ENCODE measurements at regions of chr5 and their contacts with region 1.

Region 1: GRCh38 chr5:149990518-149991376 is 9.7 kb downstream of the TIGD6 start:
- DNase-seq: peak; percentile 24 to 90 (median 75)

Region 2: DNA sequence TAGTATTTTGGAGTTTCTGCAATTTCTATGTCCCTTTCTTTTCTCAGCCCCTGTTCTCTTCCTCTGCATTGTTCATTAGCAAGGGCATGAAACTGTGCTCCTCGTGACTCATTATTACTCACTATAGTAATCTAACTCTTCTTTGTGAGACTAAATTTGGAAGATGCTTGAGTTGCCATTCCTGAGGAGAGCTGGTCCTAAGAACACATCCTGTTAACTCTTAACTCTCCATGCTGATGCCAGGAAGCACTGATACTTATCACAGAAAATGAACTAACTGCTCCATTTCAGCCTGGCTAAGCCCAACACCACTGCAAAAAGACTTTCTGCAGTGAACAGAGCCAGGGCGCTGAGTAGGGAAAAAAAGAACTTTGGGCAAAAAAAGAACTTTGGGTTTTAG is 428.9 kb before region 1 on chr5:
- intact Hi-C with region 1: no loop called
- DNase-seq: peak in 3 of 42 donors; percentile 32 to 54 (median 45)

Region 3: DNA sequence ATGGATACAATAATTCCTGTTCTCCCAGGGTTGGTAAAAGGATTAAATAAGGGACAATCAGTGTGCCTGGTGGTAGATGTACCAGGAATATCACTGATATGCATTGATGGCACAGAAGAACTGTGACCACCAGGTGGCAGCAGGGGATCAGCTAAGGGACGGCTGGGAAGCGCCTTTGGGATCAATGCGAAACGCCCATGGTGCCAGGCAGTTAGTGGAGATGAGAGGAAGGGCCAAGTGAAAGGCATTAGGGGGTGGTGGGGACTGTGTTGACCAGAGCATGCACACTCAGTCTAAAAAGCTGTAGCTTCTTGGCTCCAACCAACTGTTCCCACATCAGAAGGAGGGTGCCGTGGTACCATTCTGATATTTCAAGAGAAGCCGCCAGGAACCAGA is 353.9 kb before region 1 on chr5:
- intact Hi-C with region 1: loop called (anchors 5 kb)
- DNase-seq: peak in 33 of 42 donors; percentile 9 to 96 (median 84)

Region 4: DNA sequence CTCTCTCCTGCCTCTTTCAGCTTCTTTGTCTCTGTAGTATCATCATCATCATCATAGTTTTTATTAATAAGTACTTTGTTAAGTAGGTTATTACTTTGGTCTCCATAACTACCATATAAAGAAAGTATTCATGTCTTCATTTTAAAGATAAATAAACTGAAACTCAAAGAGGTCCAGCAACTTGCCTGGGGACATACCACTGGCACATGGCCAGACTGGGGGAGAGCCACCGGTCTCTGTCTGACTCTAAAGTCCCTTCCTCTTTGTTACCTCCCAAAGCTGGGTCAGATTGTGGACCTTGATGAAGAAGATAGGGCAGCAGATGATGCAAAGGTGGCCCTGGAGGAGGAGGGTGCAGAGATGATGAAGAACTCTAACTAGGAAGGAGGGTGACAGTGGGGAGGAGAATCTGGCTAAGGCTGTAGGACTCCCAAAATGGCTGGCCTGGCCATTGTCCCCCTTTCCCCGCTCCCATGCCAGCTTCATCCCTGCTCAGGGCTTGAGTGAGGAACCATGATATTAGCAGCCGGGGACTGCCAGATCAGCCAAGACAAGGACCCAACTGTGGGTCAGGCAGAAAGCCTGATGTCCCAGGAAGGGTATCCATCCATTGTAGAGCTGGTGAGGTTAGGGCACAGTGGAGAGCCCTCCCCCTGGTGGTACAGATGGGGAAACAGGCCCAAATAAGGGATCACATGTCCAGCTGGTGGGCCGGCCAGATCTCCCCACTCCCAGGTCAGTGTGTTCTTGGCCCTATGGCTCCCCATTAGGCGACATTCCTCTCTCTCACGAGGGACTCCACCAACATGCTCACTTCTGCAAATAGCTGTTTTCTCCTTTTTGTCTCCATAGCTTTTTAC is 184.6 kb after region 1 on chr5:
- intact Hi-C with region 1: no loop called
- DNase-seq: no peak

Measured in head of caudate nucleus (tissue), 42 donors.